HCT116 (cell line): ENCODE measurements at regions of chr7 and their contacts with region 1.

Region 1: GRCh38 chr7:7103343-7104313 is 78.7 kb upstream of the C1GALT1 start:
- DNase-seq: peak; percentile 48
- ATAC-seq: peak; percentile 59
- H3K4me3 ChIP-seq: no peak overlapping the region
- H3K27ac ChIP-seq: no peak overlapping the region
- H3K4me1 ChIP-seq: peaks cover 7 to 21% of the 10 kb centered on the region in 2 experiments; a peak in 3 of 4 replicates
- H3K27me3 ChIP-seq: no peaks in the 10 kb centered on the region
- CTCF ChIP-seq: peak; percentile 54 to 64 (median 61); a peak in 5 of 6 replicates
- POLR2A ChIP-seq: no peak
- RAD21 ChIP-seq: peak; percentile 86

Region 2: DNA sequence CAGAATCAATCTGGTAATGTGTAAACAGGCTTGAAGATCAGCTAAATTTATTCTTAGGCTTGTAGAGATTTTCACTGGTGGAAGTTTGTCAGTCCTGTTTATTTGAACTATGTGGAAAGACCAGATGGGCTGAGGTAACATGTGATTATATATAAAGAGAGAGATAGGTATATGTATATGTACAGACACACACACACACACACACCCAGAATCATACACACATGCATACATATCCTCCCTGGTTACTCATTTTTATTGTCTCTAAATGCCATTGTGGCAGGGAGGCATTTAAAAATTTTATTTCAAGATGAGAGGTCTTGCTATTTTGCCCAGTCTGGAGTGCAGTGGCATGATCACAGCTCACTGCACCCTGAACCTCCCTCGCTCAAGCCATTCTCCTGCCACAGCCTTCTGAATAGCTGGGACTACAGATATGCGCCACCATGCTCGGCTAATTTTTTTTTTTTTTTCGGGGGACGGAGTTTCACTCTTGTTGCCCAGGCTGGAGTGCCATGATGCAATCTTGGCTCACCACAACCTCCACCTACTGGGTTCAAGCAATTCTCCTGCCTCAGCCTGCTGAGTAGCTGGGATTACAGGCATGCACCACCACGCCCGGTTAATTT is 753.1 kb before region 1 on chr7:
- CTCF ChIA-PET with region 1: no interaction called
- POLR2A ChIA-PET with region 1: no interaction called
- RAD21 ChIA-PET with region 1: no interaction called
- intact Hi-C with region 1: no loop called
- DNase-seq: no peak
- ATAC-seq: no peak
- H3K4me3 ChIP-seq: no peak overlapping the region
- H3K27ac ChIP-seq: no peak overlapping the region
- H3K4me1 ChIP-seq: peaks cover 5 to 6% of the 10 kb centered on the region in 2 experiments; a peak in 2 of 4 replicates
- H3K27me3 ChIP-seq: no peaks in the 10 kb centered on the region
- CTCF ChIP-seq: no peak
- POLR2A ChIP-seq: no peak
- RAD21 ChIP-seq: no peak

Region 3: GRCh38 chr7:7182156-7183060 is 78.8 kb after region 1 on chr7 and contains the start of gene C1GALT1:
- CTCF ChIA-PET with region 1: interaction called, 6 read pairs
- POLR2A ChIA-PET with region 1: interaction called, 6 read pairs
- RAD21 ChIA-PET with region 1: no interaction called
- intact Hi-C with region 1: loop called (anchors 5 kb)
- DNase-seq: peak; percentile 93
- ATAC-seq: peak; percentile 90
- H3K4me3 ChIP-seq: peak within 1 kb of the TSS; percentile 80 to 82
- H3K27ac ChIP-seq: peak within 1 kb of the TSS; percentile 86
- H3K4me1 ChIP-seq: peaks cover 19 to 39% of the 10 kb centered on the region in 2 experiments
- H3K27me3 ChIP-seq: no peaks in the 10 kb centered on the region
- CTCF ChIP-seq: peak in 2 of 3 experiments; percentile 21 to 42; a peak in 2 of 6 replicates
- POLR2A ChIP-seq: peak; percentile 97
- RAD21 ChIP-seq: peak; percentile 44
- total RNA-seq, gene C1GALT1: 27.2 TPM

Region 4: DNA sequence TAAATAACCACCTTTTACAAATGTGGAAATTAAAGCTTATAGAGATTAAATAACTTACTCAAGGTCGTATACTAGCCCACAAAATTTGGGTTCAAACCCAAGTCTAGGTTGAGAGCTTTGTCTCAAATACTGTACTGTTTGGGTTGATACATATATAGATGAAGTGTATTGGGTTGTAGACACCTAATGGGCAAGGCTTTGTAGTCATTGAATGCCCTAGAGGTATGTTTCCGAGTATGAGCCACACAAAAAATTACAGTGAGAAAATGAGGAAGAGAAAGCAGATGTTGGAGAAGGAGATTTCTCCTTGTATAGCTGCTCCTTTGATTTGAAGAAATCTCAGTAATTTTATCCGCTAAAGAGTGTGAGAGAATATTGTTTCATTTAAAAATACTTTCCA is 139.3 kb after region 1 on chr7:
- CTCF ChIA-PET with region 1: no interaction called
- POLR2A ChIA-PET with region 1: no interaction called
- RAD21 ChIA-PET with region 1: no interaction called
- intact Hi-C with region 1: loop called (anchors 10 kb)
- DNase-seq: no peak
- ATAC-seq: no peak
- H3K4me3 ChIP-seq: no peak overlapping the region
- H3K27ac ChIP-seq: no peak overlapping the region
- H3K4me1 ChIP-seq: peaks cover 12 to 20% of the 10 kb centered on the region in 2 experiments
- H3K27me3 ChIP-seq: no peaks in the 10 kb centered on the region
- CTCF ChIP-seq: no peak
- POLR2A ChIP-seq: no peak
- RAD21 ChIP-seq: no peak

Region 5: DNA sequence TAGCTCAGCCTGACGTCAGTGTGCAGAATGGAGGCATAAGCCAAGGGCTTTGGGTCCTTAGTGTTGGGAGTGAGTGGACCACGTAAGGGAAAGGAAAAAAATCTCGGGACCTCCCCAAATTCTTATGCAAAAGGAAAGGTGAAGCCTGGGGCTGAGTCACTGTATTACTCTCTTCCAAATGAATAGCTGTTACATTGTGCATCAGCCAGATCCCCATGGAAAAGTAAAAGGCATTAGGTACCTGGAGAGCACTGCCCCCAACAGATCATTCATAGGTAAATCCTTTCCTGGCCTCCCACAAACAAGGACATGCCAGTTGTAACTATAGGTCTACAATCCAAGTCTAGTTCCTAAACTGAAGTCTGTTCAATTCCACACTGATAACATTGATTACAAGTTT is 249.2 kb after region 1 on chr7:
- CTCF ChIA-PET with region 1: interaction called, 6 read pairs
- POLR2A ChIA-PET with region 1: no interaction called
- RAD21 ChIA-PET with region 1: interaction called in 1 of 2 experiments, 3 read pairs
- intact Hi-C with region 1: loop called (anchors 5 kb)
- DNase-seq: no peak
- ATAC-seq: peak; percentile 70
- H3K4me3 ChIP-seq: no peak overlapping the region
- H3K27ac ChIP-seq: no peak overlapping the region
- H3K4me1 ChIP-seq: peaks cover 7 to 13% of the 10 kb centered on the region in 2 experiments
- H3K27me3 ChIP-seq: no peaks in the 10 kb centered on the region
- CTCF ChIP-seq: peak in 2 of 3 experiments; percentile 20 to 24; a peak in 2 of 6 replicates
- POLR2A ChIP-seq: no peak
- RAD21 ChIP-seq: peak; percentile 60

Region 6: DNA sequence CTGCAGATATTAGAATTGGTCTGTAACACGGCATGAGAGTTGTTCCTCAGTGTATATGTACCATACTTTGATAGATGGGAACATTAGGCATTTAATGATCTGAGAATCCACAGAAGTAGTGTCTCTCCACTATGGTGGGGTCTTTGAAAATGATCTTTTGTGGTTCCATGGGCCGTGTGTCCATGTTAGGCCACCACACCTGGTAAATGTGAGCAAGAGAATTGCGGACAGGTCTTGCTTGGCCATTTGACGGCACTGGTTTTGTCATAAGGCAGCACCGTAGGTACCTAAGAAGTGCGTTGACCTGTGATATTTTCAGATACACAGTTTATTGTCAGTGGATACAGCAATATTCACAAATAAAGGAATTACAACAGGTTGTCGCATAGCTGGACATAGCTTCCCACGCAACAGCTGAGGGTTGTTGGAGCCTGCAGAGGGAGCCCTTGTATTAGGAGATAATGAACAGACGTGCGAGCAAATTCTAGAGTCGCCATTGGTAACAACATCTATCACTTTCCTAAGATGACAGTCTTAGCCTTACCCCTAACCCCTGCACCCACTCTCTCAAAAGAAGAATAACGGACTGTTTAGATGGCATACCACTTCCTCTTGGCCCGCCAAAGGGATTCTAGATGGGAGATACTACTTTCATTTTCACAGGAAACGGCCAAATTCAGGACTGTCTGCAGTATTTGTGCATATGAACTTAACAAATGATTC is 320.7 kb after region 1 on chr7:
- CTCF ChIA-PET with region 1: interaction called, 12 read pairs
- POLR2A ChIA-PET with region 1: no interaction called
- RAD21 ChIA-PET with region 1: no interaction called
- intact Hi-C with region 1: loop called (anchors 2 kb)
- DNase-seq: peak; percentile 66
- ATAC-seq: peak; percentile 96
- H3K4me3 ChIP-seq: peak overlapping the region; percentile 23 to 42
- H3K27ac ChIP-seq: no peak overlapping the region
- H3K4me1 ChIP-seq: peaks cover 0 to 3% of the 10 kb centered on the region in 2 experiments; a peak in 2 of 4 replicates
- H3K27me3 ChIP-seq: no peaks in the 10 kb centered on the region
- CTCF ChIP-seq: peak; percentile 85 to 91 (median 89)
- POLR2A ChIP-seq: no peak
- RAD21 ChIP-seq: peak; percentile 99

Region 7: DNA sequence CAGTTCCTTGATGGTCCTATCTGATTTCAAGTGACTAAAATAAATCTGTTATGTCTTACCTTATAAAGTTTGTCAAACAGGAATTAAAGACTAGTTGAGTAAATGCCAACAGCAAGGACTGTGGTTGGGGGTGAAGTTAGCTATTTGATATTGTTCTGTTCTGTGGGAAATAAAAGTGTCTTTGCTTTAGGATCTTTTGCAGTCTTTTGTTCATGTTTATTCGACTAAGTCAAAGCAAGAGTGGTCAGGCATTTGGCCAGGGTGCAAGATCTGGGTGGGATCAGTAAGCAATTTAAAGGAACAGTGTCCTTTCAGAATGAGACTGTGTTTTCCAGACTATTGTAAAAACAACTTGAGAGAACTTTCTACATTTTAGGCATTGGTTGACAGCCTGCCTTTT is 432.1 kb after region 1 on chr7 and contains the start of gene COL28A1:
- CTCF ChIA-PET with region 1: no interaction called
- POLR2A ChIA-PET with region 1: no interaction called
- RAD21 ChIA-PET with region 1: no interaction called
- intact Hi-C with region 1: loop called (anchors 2 kb)
- DNase-seq: no peak
- ATAC-seq: no peak
- H3K4me3 ChIP-seq: no peak within 1 kb of the TSS
- H3K27ac ChIP-seq: no peak within 1 kb of the TSS
- H3K4me1 ChIP-seq: no peaks in the 10 kb centered on the region
- H3K27me3 ChIP-seq: no peaks in the 10 kb centered on the region
- CTCF ChIP-seq: no peak
- POLR2A ChIP-seq: no peak
- RAD21 ChIP-seq: no peak
- total RNA-seq, gene COL28A1: 0.12 TPM